H1 (cell line): ENCODE measurements at regions of chr15 and their contacts with region 1.

Region 1: GRCh38 chr15:99961011-99961441 is 227.8 kb upstream of the LYSMD4 start:
- DNase-seq: peak in 1 of 2 experiments; percentile 77
- H3K4me3 ChIP-seq: no peak overlapping the region
- H3K27ac ChIP-seq: no peak overlapping the region
- H3K4me1 ChIP-seq: peaks cover 0 to 2% (median under 1%) of the 10 kb centered on the region in 4 experiments; a peak in 1 of 7 replicates
- H3K27me3 ChIP-seq: peaks cover 0 to 2% (median 0%) of the 10 kb centered on the region in 4 experiments; a peak in 1 of 7 replicates
- CTCF ChIP-seq: peak in 2 of 3 experiments; percentile 50 to 62; a peak in 3 of 4 replicates
- EP300 ChIP-seq: no peak
- POLR2A ChIP-seq: no peak
- RAD21 ChIP-seq: peak; percentile 65 to 72

Region 2: DNA sequence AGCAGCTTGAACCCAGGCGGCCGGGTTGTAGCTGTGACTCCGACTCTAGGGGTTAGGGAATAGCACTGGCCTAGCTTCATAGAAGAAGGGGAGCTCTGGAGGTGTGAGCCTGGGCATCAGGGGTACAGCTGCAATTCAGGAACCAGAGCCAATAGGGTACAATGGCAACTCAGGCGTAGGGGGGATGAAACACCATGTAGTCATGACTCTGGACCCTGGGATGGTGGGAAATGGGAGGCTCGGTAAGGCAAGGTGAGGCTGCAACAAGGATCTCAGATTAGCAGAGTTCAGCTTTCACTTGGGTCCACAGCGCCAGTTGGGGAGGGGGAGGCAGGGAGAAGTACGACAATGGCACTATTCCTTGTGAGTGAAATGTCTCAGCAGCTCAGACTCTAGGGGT is 17.6 kb before region 1 on chr15:
- CTCF ChIA-PET with region 1: interaction called, 10 read pairs
- POLR2A ChIA-PET with region 1: no interaction called
- DNase-seq: no peak
- H3K4me3 ChIP-seq: no peak overlapping the region
- H3K27ac ChIP-seq: no peak overlapping the region
- H3K4me1 ChIP-seq: no peaks in the 10 kb centered on the region
- H3K27me3 ChIP-seq: no peaks in the 10 kb centered on the region
- CTCF ChIP-seq: no peak
- EP300 ChIP-seq: no peak
- POLR2A ChIP-seq: no peak
- RAD21 ChIP-seq: no peak

Region 3: DNA sequence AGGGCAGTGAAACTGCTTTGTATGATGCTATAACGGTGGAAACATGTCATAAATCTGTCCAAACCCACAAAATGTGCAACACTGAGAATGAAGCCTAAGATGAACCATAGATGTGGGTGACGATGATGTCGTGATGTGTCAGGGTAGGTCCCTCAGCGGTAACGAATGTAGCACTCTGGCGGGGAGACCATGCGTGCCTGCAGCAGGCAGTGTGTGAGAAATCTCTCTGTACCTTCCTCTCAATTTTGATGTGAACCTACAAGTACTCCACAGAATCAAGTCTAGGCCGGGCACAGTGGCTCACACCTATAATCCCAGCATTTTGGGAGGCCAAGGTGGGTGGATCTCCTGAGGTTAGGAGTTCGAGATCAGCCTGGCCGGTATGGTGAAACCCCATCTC is 40.4 kb after region 1 on chr15:
- CTCF ChIA-PET with region 1: interaction called, 10 read pairs
- POLR2A ChIA-PET with region 1: no interaction called
- DNase-seq: no peak
- H3K4me3 ChIP-seq: no peak overlapping the region
- H3K27ac ChIP-seq: no peak overlapping the region
- H3K4me1 ChIP-seq: peaks cover 0 to 8% (median 4%) of the 10 kb centered on the region in 4 experiments; a peak in 5 of 7 replicates
- H3K27me3 ChIP-seq: no peaks in the 10 kb centered on the region
- CTCF ChIP-seq: no peak
- EP300 ChIP-seq: no peak
- POLR2A ChIP-seq: no peak
- RAD21 ChIP-seq: no peak

Region 4: DNA sequence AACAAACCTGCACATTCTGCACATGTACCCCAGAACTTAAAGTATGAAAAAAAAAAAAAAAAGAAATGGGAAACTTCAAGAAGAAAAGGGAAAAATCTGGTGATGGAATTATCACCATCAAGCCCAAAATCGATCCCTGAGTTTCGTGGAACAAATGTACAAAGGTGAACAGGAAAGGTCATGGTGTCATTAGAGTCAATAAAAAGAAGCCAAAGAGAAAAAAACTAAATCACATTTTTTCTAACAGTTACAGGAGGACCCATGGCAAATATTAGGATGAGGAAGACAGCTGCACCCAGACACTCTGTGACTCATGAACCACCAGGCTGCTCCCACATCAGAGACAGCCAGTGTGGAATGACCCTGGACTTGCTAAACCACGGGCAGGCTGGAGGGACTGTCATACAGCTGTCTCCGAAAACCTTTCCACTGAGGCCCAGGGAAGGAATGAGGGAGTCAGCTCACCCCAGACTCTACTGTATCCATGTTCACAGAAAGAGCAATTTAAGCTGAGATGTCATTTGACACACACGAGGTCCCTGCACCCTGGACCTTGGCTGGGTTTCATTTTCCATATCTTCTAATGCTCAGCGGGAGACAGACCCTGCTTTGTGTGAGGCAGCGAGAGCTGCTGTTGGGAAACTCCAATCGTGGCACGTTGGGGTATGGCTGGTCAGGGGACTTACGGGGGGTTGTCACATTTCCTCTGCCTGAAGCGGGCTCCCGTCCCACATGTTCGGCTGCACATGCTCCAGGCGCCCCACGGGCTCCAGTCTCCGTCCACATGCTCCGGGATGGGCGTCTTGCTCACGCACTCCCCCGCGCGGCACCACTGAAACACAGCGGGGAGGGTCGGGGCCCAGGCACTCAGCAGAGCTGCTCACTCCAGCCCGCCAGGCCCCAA is 170.5 kb after region 1 on chr15:
- CTCF ChIA-PET with region 1: interaction called, 15 read pairs
- POLR2A ChIA-PET with region 1: no interaction called
- DNase-seq: no peak
- H3K4me3 ChIP-seq: no peak overlapping the region
- H3K27ac ChIP-seq: no peak overlapping the region
- H3K4me1 ChIP-seq: no peaks in the 10 kb centered on the region
- H3K27me3 ChIP-seq: no peaks in the 10 kb centered on the region
- CTCF ChIP-seq: peak; percentile 10 to 17 (median 14); a peak in 3 of 4 replicates
- EP300 ChIP-seq: no peak
- POLR2A ChIP-seq: no peak
- RAD21 ChIP-seq: peak; percentile 33 to 50; a peak in 3 of 4 replicates